ENCODE measurements at regions of chr2 and their contacts with region 1.

Region 1: GRCh38 chr2:224778474-224778877 is 62.3 kb upstream of the CCDC195 start:
- H3K4me3 Mint-ChIP-seq: no peak overlapping the region
- H3K27ac Mint-ChIP-seq: no peak overlapping the region
- H3K4me1 Mint-ChIP-seq: no peaks in the 10 kb centered on the region
- H3K27me3 Mint-ChIP-seq: no peaks in the 10 kb centered on the region

Region 2: DNA sequence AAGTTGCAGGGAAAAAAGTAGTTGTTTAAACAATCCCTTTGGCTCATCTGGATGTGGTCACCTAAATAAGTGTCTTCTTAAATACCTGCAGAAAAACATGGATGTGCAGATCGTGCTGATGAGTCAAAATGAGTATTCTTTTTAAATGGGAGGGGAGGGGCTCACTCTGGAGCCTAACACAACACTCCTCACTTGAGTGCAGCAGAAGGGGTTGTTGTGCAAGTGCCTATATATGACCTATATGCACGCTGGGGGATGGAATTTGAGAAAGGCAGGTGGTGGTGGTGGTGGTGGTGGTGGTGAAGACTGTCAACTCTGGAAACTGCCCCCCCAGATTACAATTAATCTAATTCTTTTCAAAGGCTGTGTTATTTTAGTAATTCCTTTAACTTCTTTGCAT is 298.6 kb before region 1 on chr2:
- intact Hi-C with region 1: loop called (anchors 10 kb)
- H3K4me3 Mint-ChIP-seq: no peak overlapping the region
- H3K27ac Mint-ChIP-seq: no peak overlapping the region
- H3K4me1 Mint-ChIP-seq: peaks cover 7% of the 10 kb centered on the region
- H3K27me3 Mint-ChIP-seq: no peaks in the 10 kb centered on the region

Measured in dendritic cell treated with granulocyte-macrophage colony-stimulating factor and Interleukin-4, amounts not matched to agents 40 ng/mL and 50 ng/mL, for 4 days (primary cell).